ENCODE measurements at regions of chr1 and their contacts with region 1.

Region 1: GRCh38 chr1:109112652-109113285 is 1.1 kb upstream of the ELAPOR1 start:
- DNase-seq: peak; percentile 93 to 97 (median 96)
- ATAC-seq: peak; percentile 98
- H3K4me3 ChIP-seq: no peak overlapping the region
- H3K27ac ChIP-seq: no peak overlapping the region
- H3K4me1 ChIP-seq: peaks cover 10 to 20% of the 10 kb centered on the region in 2 experiments; a peak in 4 of 5 replicates
- H3K27me3 ChIP-seq: peaks cover 0 to 6% of the 10 kb centered on the region in 2 experiments; a peak in 1 of 5 replicates
- CTCF ChIP-seq: peak; percentile 96 to 99 (median 97)
- EP300 ChIP-seq: no peak
- POLR2A ChIP-seq: no peak
- RAD21 ChIP-seq: peak; percentile 78 to 88

Region 2: DNA sequence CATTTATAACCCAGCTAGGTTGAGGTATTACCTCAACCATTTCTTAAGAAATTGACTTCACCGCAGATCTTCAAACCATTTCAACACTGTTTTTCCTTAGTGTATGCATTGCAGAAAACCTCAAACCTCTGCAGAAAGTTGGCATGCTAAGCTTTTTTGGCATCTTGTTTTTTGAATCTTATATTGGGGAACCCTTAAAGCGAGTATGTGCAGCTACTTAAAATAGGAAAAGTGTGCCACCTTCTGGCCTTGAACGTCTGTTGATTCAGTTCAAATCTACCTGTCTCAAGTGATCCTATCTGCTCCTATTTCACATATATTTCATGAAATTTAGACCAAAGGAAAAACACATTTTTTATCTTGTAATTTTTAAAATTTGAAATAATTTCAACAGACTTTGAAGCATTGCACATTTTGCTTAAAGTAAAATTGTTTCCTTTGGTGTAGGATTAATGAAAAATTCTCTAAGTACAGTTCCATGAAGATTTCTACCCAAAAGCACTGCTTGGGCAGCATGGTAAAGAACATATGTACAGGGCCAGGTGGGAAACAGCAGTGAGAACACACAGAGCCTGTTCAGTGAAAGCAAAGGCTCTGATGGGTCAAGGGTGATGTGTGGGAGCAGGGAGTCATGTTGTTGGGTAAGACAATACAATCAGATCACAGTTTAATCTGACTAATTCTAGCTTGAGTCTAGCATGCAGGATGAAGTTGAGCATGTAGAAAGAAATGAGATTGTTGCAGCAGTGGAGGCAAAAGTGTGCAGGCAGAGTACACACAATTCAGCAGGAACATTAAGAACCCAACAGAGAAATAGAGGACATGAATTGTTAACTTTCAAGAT is 469.1 kb before region 1 on chr1:
- CTCF ChIA-PET with region 1: interaction called, 4 read pairs
- POLR2A ChIA-PET with region 1: no interaction called
- in situ Hi-C with region 1: no loop called
- intact Hi-C with region 1: loop called (anchors 1 kb)
- DNase-seq: peak; percentile 31 to 80 (median 46)
- ATAC-seq: peak; percentile 85
- H3K4me3 ChIP-seq: no peak overlapping the region
- H3K27ac ChIP-seq: no peak overlapping the region
- H3K4me1 ChIP-seq: peaks cover 0 to 8% of the 10 kb centered on the region in 2 experiments; a peak in 3 of 5 replicates
- H3K27me3 ChIP-seq: no peaks in the 10 kb centered on the region; a peak in 1 of 5 replicates
- CTCF ChIP-seq: peak; percentile 58 to 91 (median 70); a peak in 5 of 6 replicates
- EP300 ChIP-seq: no peak
- POLR2A ChIP-seq: no peak
- RAD21 ChIP-seq: peak; percentile 94 to 97

Region 3: DNA sequence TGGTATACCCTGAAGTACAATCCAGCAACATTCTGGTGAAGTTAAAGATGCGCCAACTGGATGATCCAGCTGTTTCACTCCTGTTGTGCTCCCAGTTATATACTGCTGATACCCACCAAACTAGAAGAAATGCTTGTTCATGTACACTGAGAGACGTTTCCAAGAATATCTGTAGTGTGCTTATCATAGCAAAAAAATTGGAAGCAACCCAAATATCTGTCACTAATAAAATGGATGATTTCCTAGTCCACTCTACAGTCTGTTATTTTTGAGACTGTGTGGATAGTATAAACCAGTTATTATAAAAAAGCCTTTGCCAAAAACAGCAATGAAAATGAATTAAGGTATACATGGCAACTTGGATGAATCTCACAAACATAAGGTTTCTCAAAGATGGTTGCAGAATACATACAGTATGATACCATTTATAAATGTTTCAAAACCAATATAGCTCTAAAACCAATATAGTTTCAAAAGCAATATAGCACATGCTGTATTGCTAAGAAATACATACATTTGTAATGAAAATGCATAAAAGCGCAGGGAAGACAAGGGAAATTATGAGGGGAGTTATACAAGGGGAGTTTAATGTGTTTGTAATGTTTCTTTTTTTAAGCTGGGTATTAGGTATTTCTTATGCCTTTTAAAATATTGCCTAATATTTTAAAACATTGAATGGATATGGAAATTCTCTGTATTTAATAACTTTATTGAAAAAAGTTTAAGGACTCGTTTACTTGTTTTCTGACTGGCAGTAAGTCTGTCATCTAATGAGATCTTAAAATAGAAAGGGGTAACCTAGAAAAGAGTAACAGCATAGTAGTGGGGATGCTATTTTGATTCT is 199.4 kb before region 1 on chr1:
- CTCF ChIA-PET with region 1: no interaction called
- POLR2A ChIA-PET with region 1: interaction called, 4 read pairs
- in situ Hi-C with region 1: no loop called
- intact Hi-C with region 1: loop called (anchors 5 kb)
- DNase-seq: peak; percentile 24 to 88 (median 54)
- ATAC-seq: peak; percentile 93
- H3K4me3 ChIP-seq: no peak overlapping the region
- H3K27ac ChIP-seq: peak overlapping the region; percentile 57; the same call in 2 of the 3 replicates
- H3K4me1 ChIP-seq: peaks cover 11 to 13% of the 10 kb centered on the region in 2 experiments
- H3K27me3 ChIP-seq: no peaks in the 10 kb centered on the region
- CTCF ChIP-seq: no peak
- EP300 ChIP-seq: peak; percentile 83
- POLR2A ChIP-seq: no peak
- RAD21 ChIP-seq: 0 out of 4 replicates have a peak, but pooled peaks of 1 of the 2 experiments have one; percentile 24

Region 4: GRCh38 chr1:109090196-109091077 is 22.3 kb before region 1 on chr1 and contains the start of gene TMEM167B:
- CTCF ChIA-PET with region 1: interaction called, 12 read pairs
- POLR2A ChIA-PET with region 1: interaction called, 9 read pairs
- in situ Hi-C with region 1: no loop called
- intact Hi-C with region 1: loop called (anchors 1 kb)
- DNase-seq: peak; percentile 89 to 98 (median 90)
- ATAC-seq: peak; percentile 86
- H3K4me3 ChIP-seq: peak within 1 kb of the TSS; percentile 85
- H3K27ac ChIP-seq: peak within 1 kb of the TSS; percentile 95
- H3K4me1 ChIP-seq: peaks cover 0 to 16% of the 10 kb centered on the region in 2 experiments; a peak in 3 of 5 replicates
- H3K27me3 ChIP-seq: no peaks in the 10 kb centered on the region
- CTCF ChIP-seq: no peak; a peak in 1 of 6 replicates
- EP300 ChIP-seq: peak; percentile 78
- POLR2A ChIP-seq: peak; percentile 91
- RAD21 ChIP-seq: no peak; a peak in 1 of 4 replicates
- polyA plus RNA-seq, gene TMEM167B: 25.0 to 36.3 TPM

Region 5: DNA sequence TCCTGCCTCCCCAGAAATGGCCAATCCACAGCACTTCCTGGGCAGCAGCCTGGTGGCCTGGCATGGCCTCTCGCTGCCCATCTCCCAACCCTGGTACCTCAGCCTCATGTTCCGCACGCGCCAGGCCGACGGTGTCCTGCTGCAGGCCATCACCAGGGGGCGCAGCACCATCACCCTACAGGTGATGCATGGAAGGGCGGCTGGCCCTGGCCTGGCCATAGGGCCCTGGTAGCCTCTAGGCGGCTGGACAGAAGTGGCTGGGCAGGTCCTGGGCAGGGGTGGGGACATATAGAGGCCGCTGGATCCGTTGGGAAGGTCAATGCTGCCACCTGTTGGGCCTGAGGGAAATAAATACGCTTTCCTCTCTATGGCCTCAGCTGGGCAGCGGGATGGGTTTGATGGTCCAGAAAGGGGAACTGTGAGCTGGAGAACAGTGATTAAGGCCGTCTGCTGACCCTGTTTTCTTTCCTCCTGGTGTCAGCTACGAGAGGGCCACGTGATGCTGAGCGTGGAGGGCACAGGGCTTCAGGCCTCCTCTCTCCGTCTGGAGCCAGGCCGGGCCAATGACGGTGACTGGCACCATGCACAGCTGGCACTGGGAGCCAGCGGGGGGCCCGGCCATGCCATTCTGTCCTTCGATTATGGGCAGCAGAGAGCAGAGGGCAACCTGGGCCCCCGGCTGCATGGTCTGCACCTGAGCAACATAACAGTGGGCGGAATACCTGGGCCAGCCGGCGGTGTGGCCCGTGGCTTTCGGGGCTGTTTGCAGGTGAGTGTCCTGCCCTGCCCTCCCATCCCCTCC is 151.0 kb after region 1 on chr1:
- CTCF ChIA-PET with region 1: no interaction called
- POLR2A ChIA-PET with region 1: no interaction called
- in situ Hi-C with region 1: no loop called
- intact Hi-C with region 1: loop called (anchors 10 kb)
- DNase-seq: peak; percentile 91 to 96 (median 93)
- ATAC-seq: peak; percentile 99
- H3K4me3 ChIP-seq: no peak overlapping the region
- H3K27ac ChIP-seq: no peak overlapping the region
- H3K4me1 ChIP-seq: peaks cover 0 to 31% of the 10 kb centered on the region in 2 experiments; a peak in 2 of 5 replicates
- H3K27me3 ChIP-seq: no peaks in the 10 kb centered on the region
- CTCF ChIP-seq: peak; percentile 99 to 100 (median 100)
- EP300 ChIP-seq: peak; percentile 16; the same call in 1 of the 2 replicates
- POLR2A ChIP-seq: no peak
- RAD21 ChIP-seq: peak; percentile 98 to 100